Posterior cingulate gyrus (tissue), 11 donors: ENCODE measurements at regions of chr22 and their contacts with region 1.

Region 1: DNA sequence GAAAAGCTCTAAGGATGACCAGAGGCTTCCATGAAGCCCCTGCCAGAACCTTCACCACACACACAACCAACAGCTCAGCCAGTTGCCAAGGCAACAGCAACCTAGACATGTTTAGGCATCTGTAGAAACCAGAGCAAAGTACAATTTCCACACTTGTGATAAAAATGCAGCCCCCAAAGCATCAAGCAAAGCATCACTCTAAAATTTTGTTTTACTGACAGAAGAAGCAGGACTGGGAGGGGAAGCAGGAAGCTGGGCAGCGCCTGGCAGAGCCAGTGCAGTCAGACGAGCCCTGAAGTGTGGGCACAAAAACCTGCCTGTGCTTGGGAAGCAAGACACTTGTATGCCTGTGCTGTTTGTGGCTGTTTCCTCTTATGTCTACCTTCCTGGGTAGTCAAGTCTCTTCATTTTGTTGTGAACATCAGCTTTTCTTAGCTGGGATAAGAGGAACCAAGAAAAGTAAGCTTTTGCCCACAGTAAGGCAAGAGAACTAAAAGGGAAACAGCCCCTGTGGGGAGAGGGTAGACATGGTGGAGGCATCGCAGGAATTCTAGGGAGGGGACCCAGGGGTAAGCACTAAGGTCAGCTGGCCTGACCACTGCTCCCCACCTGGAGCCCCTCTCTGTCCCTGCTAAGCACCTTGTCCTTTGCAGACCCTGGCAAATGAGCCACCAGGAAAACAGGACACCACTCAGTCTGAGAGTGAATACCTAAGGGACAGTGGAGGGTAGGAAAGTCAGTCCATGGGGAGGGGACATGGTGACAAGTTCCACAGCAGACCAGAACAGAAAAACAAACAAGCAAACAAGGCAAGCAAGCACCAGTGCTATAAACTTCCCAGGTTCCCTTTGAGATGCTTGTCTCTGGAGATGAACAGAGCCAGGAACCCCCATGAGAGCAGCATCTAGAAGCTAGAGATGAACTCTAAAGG is 13.4 kb downstream of the PACSIN2 start:
- DNase-seq: peak in 5 of 10 donors; percentile 26 to 92 (median 82)

Region 2: DNA sequence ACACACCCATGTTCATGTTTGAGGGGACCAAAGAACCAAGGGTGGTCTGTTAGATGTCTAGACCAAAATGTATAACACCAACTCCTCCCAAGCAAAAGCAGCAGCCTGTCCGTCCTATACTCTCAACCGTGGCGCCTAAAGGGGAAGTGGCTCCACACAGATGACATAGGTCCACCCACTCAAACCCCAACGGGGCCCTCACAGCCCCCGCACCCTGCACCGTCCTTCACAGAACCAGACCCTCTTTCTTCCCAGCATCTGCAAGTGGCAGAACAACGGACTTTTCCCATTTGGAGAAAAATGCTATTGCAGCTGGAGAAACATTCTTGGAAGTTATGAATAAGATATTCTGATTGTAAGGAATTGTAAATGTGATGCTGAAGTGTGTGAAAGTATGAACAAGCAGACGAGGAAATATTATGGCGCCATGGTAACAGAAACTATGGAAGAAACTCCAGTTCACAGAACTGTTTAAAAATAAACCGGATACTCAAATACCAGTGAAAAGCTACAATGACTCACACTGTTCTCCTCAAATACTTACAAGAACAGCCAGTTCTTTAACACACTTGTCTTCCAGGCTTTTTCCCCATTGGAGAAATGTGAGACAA is 68.0 kb before region 1 on chr22:
- intact Hi-C with region 1: loop called (anchors 5 kb)
- DNase-seq: no peak

Region 3: GRCh38 chr22:43187171-43188099 is 185.9 kb after region 1 on chr22:
- intact Hi-C with region 1: no loop called
- DNase-seq: peak; percentile 89 to 99 (median 92)